Right ventricle myocardium superior (tissue), 1 donor: ENCODE measurements at regions of chr17 and their contacts with region 1.

Region 1: GRCh38 chr17:78421484-78422266 is 43.2 kb downstream of the PGS1 start:
- DNase-seq: peak; percentile 88
- ATAC-seq: peak; percentile 86

Region 2: GRCh38 chr17:78112518-78113226 is 309.0 kb before region 1 on chr17:
- intact Hi-C with region 1: loop called (anchors 10 kb)
- DNase-seq: peak; percentile 91
- ATAC-seq: peak; percentile 68

Region 3: GRCh38 chr17:78250891-78251794 is 170.5 kb before region 1 on chr17:
- intact Hi-C with region 1: loop called (anchors 2 kb)
- DNase-seq: peak; percentile 90
- ATAC-seq: peak; percentile 79

Region 4: DNA sequence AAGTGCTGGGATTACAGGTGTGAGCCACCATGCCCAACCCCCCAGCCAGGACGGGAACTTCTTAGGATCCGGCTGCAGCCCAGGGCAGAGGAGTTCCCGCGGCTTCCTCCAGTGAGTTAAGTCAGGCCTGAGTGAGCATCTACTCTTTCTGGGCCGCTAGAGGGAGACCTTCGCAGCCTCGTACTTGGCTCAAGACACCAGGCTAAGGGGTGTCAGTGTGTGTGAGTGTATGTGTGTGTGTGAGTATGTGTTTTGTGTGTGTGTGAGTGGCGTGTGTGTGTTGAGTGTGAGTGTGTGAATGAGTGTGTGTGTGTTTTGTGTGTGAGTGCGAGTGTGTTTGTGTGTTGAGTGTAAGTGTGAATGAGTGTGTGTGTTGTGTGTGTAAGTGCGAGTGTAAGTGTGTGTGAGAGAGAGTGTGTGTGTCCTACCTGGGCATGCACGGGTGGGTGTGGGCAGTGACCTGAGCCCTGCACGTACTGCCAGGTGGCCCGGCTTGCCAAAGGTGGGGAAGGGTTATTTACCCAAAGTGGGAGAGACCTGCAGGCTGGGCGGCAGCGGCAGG is 131.8 kb before region 1 on chr17:
- intact Hi-C with region 1: loop called (anchors 2 kb)
- DNase-seq: peak; percentile 85
- ATAC-seq: peak; percentile 93

Region 5: GRCh38 chr17:78360371-78361224 is 61.1 kb before region 1 on chr17:
- intact Hi-C with region 1: loop called (anchors 2 kb)
- DNase-seq: peak; percentile 96
- ATAC-seq: peak; percentile 81